ENCODE measurements at regions of chr19 and their contacts with region 1.

Region 1: DNA sequence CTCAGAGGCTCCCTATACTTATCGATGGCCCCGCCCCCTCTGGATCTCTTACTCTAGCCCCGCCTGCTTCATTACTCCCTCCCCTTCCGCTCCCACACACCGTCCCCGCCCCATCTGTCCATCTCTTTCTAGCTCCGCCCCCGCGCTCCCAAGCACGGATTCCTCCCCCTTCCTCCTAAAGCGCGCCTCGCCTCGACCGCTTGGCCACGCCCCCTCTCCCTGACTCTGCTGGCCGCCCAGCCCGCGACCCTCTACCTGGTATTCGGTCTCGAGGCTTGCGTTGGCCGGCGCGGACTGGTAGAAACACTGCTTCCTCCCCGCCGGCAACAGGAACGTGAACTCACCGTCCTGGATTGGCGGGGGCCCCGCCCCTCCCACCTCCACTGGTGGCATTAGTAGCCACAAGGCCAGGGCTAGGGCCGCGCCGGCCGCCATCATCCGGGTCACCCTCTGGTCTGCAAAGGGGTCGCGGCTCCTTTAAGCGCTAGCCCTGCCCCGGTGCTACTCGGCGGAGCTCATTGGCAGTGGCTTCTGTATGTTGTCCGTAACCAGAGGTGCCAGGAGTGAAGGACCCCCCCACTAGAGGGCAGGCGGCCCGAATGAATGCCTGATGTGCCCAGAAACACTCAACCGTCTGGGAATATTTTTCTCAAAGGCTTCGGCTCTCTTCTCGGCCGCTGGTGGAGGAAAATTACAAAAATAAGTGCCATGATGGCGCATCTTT is at the start of gene TMED1:
- DNase-seq: peak; percentile 82 to 98 (median 93)
- ATAC-seq: peak; percentile 86
- H3K4me3 ChIP-seq: peak within 1 kb of the TSS; percentile 88 to 96
- H3K4me3 Mint-ChIP-seq: peak within 1 kb of the TSS; percentile 98
- H3K27ac ChIP-seq: peak within 1 kb of the TSS; percentile 87 to 96
- H3K27ac Mint-ChIP-seq: peak within 1 kb of the TSS; percentile 99
- H3K4me1 ChIP-seq: peaks cover 14% of the 10 kb centered on the region
- H3K4me1 Mint-ChIP-seq: peaks cover 9% of the 10 kb centered on the region
- H3K27me3 ChIP-seq: no peaks in the 10 kb centered on the region
- H3K27me3 Mint-ChIP-seq: no peaks in the 10 kb centered on the region
- CTCF ChIP-seq: no peak
- total RNA-seq, gene TMED1: 8.2 to 13.5 TPM

Region 2: DNA sequence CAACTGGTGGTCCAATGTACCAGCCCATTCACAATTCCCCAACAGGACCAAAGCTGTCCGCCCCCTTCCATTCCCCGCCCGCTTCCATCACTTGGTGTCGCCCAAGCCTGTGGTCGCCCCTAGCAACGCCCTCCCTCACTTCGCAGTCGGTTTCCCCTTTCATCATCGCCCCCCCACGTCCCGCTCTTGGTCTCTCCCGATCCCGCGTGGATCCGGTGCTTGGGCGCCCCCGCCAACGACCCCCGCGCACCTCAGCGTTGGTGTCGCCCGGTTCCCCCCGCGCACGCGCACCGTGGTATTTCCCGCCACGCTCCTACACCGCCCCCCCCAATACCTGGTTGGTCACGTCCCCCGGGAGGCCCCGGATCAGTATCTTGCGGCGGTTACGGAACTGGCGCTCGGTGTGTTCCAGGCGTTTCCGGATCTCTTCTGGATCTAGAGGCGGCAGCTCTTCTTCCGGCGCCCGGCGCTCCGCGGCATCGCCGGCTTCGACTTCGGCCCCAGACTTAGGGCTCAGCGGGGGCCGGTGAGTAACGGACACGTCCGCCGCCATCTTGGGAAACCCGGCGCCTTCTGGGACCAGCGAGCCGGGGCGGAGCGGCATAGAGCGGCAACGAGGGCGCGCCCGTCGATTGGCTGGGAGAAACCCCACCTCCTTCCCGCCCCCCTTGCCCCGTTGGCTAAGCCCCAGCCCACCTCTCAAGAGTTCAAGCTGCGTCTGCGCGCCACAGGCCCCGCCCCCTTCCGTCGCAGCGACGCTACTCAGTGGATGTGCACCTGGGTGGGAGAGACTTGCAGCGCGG is 502.8 kb before region 1 on chr19 and contains the start of gene RAVER1:
- CTCF ChIA-PET with region 1: no interaction called
- POLR2A ChIA-PET with region 1: no interaction called
- intact Hi-C with region 1: loop called in 1 of 2 experiments (anchors 1 kb)
- DNase-seq: peak; percentile 94 to 99 (median 98)
- ATAC-seq: peak; percentile 96
- H3K4me3 ChIP-seq: peak within 1 kb of the TSS; percentile 93 to 97
- H3K4me3 Mint-ChIP-seq: peak within 1 kb of the TSS; percentile 95
- H3K27ac ChIP-seq: peak within 1 kb of the TSS; percentile 76 to 95
- H3K27ac Mint-ChIP-seq: peak within 1 kb of the TSS; percentile 93
- H3K4me1 ChIP-seq: peaks cover 30% of the 10 kb centered on the region
- H3K4me1 Mint-ChIP-seq: peaks cover 35% of the 10 kb centered on the region
- H3K27me3 ChIP-seq: no peaks in the 10 kb centered on the region
- H3K27me3 Mint-ChIP-seq: no peaks in the 10 kb centered on the region
- CTCF ChIP-seq: no peak
- total RNA-seq, gene RAVER1: 33.3 to 33.6 TPM

Region 3: DNA sequence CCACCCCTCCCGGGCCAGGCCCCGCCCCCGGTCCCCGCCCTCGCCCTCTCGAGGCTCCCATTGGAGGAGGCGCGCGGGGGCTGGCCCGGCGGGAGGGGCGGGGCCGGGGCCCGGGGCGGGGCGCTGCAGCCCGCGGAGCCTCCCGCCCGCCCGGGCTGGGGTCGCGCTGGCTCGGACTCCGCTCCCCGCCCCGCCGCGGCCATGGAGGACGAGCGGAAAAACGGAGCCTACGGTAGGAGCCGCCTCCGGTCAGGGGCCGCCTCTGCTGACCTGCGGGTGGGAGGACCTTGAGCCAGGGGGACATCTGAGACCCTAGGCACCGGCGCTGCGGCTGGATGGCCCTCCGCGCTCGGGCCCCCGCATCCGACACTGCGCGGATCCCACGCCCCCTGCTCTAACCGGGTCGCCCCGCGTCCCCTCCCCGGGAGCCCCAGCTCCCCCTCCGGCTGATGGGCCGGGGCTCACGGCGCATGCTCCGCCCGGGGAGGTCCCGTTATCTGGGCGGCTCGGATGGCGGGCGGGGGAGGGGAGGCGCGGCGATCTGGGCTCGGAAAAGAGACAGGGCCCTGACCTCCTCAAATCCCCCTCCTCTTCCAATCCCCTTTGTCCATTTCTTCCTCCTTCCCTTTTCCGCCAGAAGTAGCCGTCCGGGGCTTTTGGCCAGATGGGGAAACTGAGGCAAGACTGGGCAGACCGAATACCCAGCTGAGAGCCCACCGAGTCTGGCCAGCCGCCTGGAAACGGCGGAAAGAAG is 233.4 kb before region 1 on chr19:
- CTCF ChIA-PET with region 1: no interaction called
- POLR2A ChIA-PET with region 1: interaction called, 4 read pairs
- intact Hi-C with region 1: loop called in 1 of 2 experiments (anchors 2 kb)
- DNase-seq: peak; percentile 79 to 94 (median 86)
- ATAC-seq: peak; percentile 82
- H3K4me3 ChIP-seq: peak overlapping the region; percentile 91 to 99
- H3K4me3 Mint-ChIP-seq: peak overlapping the region; percentile 96
- H3K27ac ChIP-seq: peak overlapping the region; percentile 99 to 100
- H3K27ac Mint-ChIP-seq: peak overlapping the region; percentile 99
- H3K4me1 ChIP-seq: peaks cover 38% of the 10 kb centered on the region
- H3K4me1 Mint-ChIP-seq: peaks cover 29% of the 10 kb centered on the region
- H3K27me3 ChIP-seq: no peaks in the 10 kb centered on the region
- H3K27me3 Mint-ChIP-seq: no peaks in the 10 kb centered on the region
- CTCF ChIP-seq: no peak

Region 4: DNA sequence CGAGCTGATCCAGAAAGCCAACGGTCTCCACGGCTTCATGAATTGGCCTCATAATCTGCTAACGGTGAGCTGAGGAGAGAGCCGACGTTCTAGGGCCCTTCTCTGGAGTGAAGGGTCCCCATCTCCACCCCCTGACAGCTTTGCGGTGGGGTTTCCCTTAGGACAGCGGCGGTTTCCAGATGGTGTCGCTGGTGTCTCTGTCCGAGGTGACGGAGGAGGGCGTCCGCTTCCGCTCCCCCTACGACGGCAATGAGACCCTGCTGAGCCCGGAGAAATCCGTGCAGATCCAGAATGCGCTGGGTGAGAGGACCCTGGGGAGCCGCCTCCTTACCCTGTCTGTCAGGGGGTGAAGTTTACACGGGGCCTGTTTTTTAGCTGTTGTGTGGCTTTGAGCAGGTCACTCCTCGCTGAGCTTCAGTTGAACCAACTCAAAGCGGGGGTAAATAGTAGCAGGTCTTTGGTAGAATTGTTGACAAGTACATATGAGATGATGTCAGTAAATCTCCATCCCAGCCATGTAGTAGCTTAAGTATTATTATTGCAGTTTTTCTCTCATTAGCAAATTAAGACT is 133.9 kb before region 1 on chr19:
- CTCF ChIA-PET with region 1: interaction called, 3 read pairs
- POLR2A ChIA-PET with region 1: interaction called, 10 read pairs
- intact Hi-C with region 1: loop called in 1 of 2 experiments (anchors 1 kb)
- DNase-seq: peak in 3 of 9 experiments; percentile 16 to 54 (median 52)
- ATAC-seq: peak; percentile 20
- H3K4me3 ChIP-seq: peak overlapping the region; percentile 80 to 81
- H3K4me3 Mint-ChIP-seq: peak overlapping the region; percentile 88
- H3K27ac ChIP-seq: peak overlapping the region in 1 of 2 experiments; percentile 48
- H3K27ac Mint-ChIP-seq: no peak overlapping the region
- H3K4me1 ChIP-seq: peaks cover 11% of the 10 kb centered on the region
- H3K4me1 Mint-ChIP-seq: peaks cover 11% of the 10 kb centered on the region
- H3K27me3 ChIP-seq: no peaks in the 10 kb centered on the region
- H3K27me3 Mint-ChIP-seq: peaks cover 5% of the 10 kb centered on the region
- CTCF ChIP-seq: no peak

Region 5: GRCh38 chr19:10760273-10760944 is 75.5 kb before region 1 on chr19:
- CTCF ChIA-PET with region 1: no interaction called
- POLR2A ChIA-PET with region 1: interaction called, 8 read pairs
- intact Hi-C with region 1: loop called in 1 of 2 experiments (anchors 1 kb)
- DNase-seq: peak in 5 of 9 experiments; percentile 36 to 67 (median 54)
- ATAC-seq: peak; percentile 30
- H3K4me3 ChIP-seq: peak overlapping the region in 1 of 2 experiments; percentile 39
- H3K4me3 Mint-ChIP-seq: peak overlapping the region; percentile 66
- H3K27ac ChIP-seq: peak overlapping the region; percentile 43 to 74
- H3K27ac Mint-ChIP-seq: peak overlapping the region; percentile 95
- H3K4me1 ChIP-seq: peaks cover 81% of the 10 kb centered on the region
- H3K4me1 Mint-ChIP-seq: peaks cover 82% of the 10 kb centered on the region
- H3K27me3 ChIP-seq: no peaks in the 10 kb centered on the region
- H3K27me3 Mint-ChIP-seq: no peaks in the 10 kb centered on the region
- CTCF ChIP-seq: no peak

Region 6: GRCh38 chr19:10864538-10864899 is 28.6 kb after region 1 on chr19:
- CTCF ChIA-PET with region 1: interaction called, 32 read pairs
- POLR2A ChIA-PET with region 1: interaction called, 12 read pairs
- intact Hi-C with region 1: loop called in 1 of 2 experiments (anchors 1 kb)
- DNase-seq: peak; percentile 57 to 87 (median 82)
- ATAC-seq: peak; percentile 95
- H3K4me3 ChIP-seq: no peak overlapping the region
- H3K4me3 Mint-ChIP-seq: no peak overlapping the region
- H3K27ac ChIP-seq: no peak overlapping the region
- H3K27ac Mint-ChIP-seq: no peak overlapping the region
- H3K4me1 ChIP-seq: peaks cover 10% of the 10 kb centered on the region
- H3K4me1 Mint-ChIP-seq: peaks cover 6% of the 10 kb centered on the region
- H3K27me3 ChIP-seq: no peaks in the 10 kb centered on the region
- H3K27me3 Mint-ChIP-seq: no peaks in the 10 kb centered on the region
- CTCF ChIP-seq: peak; percentile 74

Region 7: GRCh38 chr19:10870955-10871603 is 35.2 kb after region 1 on chr19 and contains the start of gene CARM1:
- CTCF ChIA-PET with region 1: interaction called, 32 read pairs
- POLR2A ChIA-PET with region 1: interaction called, 12 read pairs
- intact Hi-C with region 1: loop called (anchors 1 kb)
- DNase-seq: peak; percentile 97 to 99 (median 99)
- ATAC-seq: peak; percentile 87
- H3K4me3 ChIP-seq: peak within 1 kb of the TSS; percentile 59 to 62
- H3K4me3 Mint-ChIP-seq: peak within 1 kb of the TSS; percentile 89
- H3K27ac ChIP-seq: peak within 1 kb of the TSS; percentile 37 to 76
- H3K27ac Mint-ChIP-seq: peak within 1 kb of the TSS; percentile 84
- H3K4me1 ChIP-seq: peaks cover 17% of the 10 kb centered on the region
- H3K4me1 Mint-ChIP-seq: peaks cover 19% of the 10 kb centered on the region
- H3K27me3 ChIP-seq: no peaks in the 10 kb centered on the region
- H3K27me3 Mint-ChIP-seq: no peaks in the 10 kb centered on the region
- CTCF ChIP-seq: no peak
- total RNA-seq, gene CARM1: 18.1 to 21.3 TPM